ENCODE measurements at regions of chr11 and their contacts with region 1.

Region 1: GRCh38 chr11:67606492-67607201 is at the start of gene NDUFV1:
- DNase-seq: peak; percentile 92 to 98 (median 96)
- ATAC-seq: peak; percentile 99
- H3K4me3 ChIP-seq: peak within 1 kb of the TSS; percentile 69
- H3K4me3 Mint-ChIP-seq: peak within 1 kb of the TSS; percentile 91
- H3K27ac ChIP-seq: peak within 1 kb of the TSS; percentile 69 to 71
- H3K27ac Mint-ChIP-seq: peak within 1 kb of the TSS; percentile 89
- H3K4me1 ChIP-seq: peaks cover 21% of the 10 kb centered on the region
- H3K4me1 Mint-ChIP-seq: peaks cover 20% of the 10 kb centered on the region
- H3K27me3 ChIP-seq: no peaks in the 10 kb centered on the region
- H3K27me3 Mint-ChIP-seq: peaks cover 8% of the 10 kb centered on the region
- CTCF ChIP-seq: peak; percentile 59
- total RNA-seq, gene NDUFV1: 220 to 237 TPM

Region 2: DNA sequence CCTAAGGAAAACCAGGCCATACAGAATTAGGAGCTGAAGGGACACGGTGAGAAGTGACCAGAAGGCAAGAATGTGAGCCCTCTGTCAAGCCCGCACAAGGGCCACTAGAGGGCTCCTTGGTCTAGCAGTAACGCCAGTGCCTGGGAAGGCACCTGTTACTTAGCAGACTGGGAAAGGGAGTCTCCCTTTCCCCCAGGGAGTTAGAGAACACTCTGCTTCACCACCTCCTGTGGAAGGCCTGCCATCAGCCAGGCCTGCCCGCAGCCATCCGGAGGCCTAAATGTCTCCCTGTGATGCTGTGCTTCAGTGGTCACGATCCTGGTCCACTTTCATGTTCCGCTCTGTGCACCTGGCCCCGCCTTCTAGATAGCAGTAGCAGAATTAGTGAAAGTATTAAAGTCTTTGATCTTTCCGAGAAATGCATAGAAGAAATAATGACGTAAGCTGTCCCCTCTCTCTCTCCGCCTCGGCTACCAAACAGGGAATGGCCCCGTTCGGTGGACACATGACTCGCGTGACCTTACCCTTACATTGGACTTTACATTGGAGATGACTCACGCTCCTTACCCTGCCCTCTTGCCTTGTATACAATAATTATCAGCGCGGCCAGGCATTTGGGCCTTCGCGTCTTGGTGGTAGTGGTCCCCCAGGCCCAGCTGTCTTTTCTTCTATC is 33.8 kb before region 1 on chr11:
- CTCF ChIA-PET with region 1: interaction called, 4 read pairs
- POLR2A ChIA-PET with region 1: no interaction called
- intact Hi-C with region 1: loop called in 1 of 2 experiments (anchors 5 kb)
- DNase-seq: peak in 4 of 9 experiments; percentile 29 to 62 (median 42)
- ATAC-seq: no peak
- H3K4me3 ChIP-seq: no peak overlapping the region
- H3K4me3 Mint-ChIP-seq: no peak overlapping the region
- H3K27ac ChIP-seq: no peak overlapping the region
- H3K27ac Mint-ChIP-seq: no peak overlapping the region
- H3K4me1 ChIP-seq: no peaks in the 10 kb centered on the region
- H3K4me1 Mint-ChIP-seq: no peaks in the 10 kb centered on the region
- H3K27me3 ChIP-seq: peaks cover 0 to 2% of the 10 kb centered on the region in 2 experiments
- H3K27me3 Mint-ChIP-seq: peaks cover 13% of the 10 kb centered on the region
- CTCF ChIP-seq: peak; percentile 22

Region 3: GRCh38 chr11:67583247-67584204 is 23.1 kb before region 1 on chr11 and contains the start of gene GSTP1:
- CTCF ChIA-PET with region 1: interaction called, 4 read pairs
- POLR2A ChIA-PET with region 1: no interaction called
- intact Hi-C with region 1: loop called (anchors 1 to 2 kb)
- DNase-seq: peak; percentile 42 to 90 (median 79)
- ATAC-seq: peak; percentile 86
- H3K4me3 ChIP-seq: peak within 1 kb of the TSS; percentile 61 to 69
- H3K4me3 Mint-ChIP-seq: peak within 1 kb of the TSS; percentile 88
- H3K27ac ChIP-seq: peak within 1 kb of the TSS; percentile 59 to 75
- H3K27ac Mint-ChIP-seq: peak within 1 kb of the TSS; percentile 85
- H3K4me1 ChIP-seq: peaks cover 24% of the 10 kb centered on the region
- H3K4me1 Mint-ChIP-seq: peaks cover 44% of the 10 kb centered on the region
- H3K27me3 ChIP-seq: no peaks in the 10 kb centered on the region
- H3K27me3 Mint-ChIP-seq: no peaks in the 10 kb centered on the region
- CTCF ChIP-seq: peak; percentile 48
- total RNA-seq, gene GSTP1: 56.8 to 56.9 TPM